Activated T-helper 2 cell treated with anti-CD3 and anti-CD28 coated beads, Interferon-gamma antibody, Interleukin-2, Interleukin-4, amounts not matched to agents 10 μg/mL and 5 μg/mL and 100 μg/mL, durations not matched to agents 14 hours and 24 hours and 36 hours (primary cell): ENCODE measurements at regions of chr3 and their contacts with region 1.

Region 1: DNA sequence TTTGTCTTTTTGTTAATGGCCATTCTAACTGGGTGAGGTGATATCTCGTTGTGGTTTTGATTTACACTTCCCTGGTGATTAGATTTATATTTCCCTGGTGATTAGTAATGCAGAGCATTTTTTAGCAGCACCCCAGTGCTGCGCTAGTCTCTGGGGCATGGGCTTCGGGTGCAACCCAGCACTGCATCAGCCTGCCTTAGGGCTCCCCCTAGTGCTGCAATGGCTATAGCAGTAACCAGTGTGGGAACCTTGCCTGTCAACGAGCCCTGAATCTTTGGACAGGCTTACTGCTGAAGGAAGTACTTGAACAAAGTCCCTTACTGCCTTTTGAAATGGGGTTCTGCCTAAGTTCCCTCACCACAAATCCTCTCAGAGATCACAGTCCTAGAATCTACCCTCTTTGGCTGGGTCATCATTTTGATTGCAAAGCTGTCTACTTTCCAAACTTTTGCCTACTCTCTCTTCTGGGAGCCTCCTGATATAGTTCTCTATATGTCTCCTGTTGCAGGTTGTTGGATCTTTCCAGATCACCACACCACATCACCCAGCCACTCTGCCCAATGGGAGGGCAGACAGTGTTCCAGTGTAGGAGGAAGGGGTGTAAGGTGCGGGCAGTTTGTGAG is 79.2 kb upstream of the CCNL1 start:
- DNase-seq: peak; percentile 57
- H3K4me3 Mint-ChIP-seq: no peak overlapping the region
- H3K27ac Mint-ChIP-seq: no peak overlapping the region
- H3K4me1 Mint-ChIP-seq: peaks cover 2% of the 10 kb centered on the region
- H3K27me3 Mint-ChIP-seq: peaks cover 10% of the 10 kb centered on the region

Region 2: DNA sequence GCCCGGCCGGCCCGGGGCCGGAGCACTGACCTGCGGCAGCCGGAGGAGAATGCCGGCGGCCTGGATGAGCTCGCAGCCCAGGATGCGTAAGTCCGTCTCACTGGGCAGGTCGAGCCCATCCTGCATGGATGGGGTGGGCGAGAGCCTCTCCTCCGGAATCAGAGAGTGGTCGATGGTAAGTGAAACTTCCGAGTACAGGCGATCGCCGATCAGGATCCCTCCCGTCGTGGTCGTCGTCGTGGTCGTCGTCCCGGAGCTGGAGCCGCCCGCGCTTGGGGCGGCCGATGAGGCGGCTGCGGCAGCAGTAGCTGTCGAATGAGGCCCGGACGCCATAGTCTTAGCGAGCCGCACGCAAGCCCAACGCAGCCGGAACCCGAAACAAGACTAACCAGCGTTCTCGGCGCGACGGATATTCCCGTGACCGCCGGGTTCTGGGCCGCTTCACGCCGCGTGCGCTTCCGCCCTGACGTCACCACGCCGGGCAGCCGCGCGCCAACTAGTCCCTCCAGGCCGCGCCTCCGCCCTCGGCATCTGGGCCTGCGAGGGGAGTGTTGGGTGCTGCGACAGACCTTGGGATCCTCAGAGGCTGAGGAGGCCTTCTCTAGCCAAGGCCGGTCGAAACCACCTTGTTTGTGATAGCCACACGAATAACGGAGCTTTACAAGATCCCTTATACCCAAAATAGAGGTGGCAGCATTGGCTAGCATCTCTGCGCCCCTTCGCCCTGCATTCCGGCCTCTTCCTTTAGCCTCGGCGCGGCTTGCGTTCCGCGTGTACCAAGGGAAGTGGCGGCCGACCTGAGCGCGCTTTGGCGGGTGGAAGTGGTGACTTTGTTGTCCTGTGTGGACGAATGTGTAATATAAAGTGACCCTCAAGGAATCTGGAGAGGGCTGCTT is 79.2 kb before region 1 on chr3 and contains the start of gene CCNL1:
- intact Hi-C with region 1: loop called (anchors 2 kb)
- DNase-seq: peak; percentile 95
- H3K4me3 Mint-ChIP-seq: peak within 1 kb of the TSS; percentile 99
- H3K27ac Mint-ChIP-seq: peak within 1 kb of the TSS; percentile 98
- H3K4me1 Mint-ChIP-seq: peaks cover 52% of the 10 kb centered on the region
- H3K27me3 Mint-ChIP-seq: no peaks in the 10 kb centered on the region
- total RNA-seq, gene CCNL1: 160 and 167 TPM in 2 replicates

Region 3: DNA sequence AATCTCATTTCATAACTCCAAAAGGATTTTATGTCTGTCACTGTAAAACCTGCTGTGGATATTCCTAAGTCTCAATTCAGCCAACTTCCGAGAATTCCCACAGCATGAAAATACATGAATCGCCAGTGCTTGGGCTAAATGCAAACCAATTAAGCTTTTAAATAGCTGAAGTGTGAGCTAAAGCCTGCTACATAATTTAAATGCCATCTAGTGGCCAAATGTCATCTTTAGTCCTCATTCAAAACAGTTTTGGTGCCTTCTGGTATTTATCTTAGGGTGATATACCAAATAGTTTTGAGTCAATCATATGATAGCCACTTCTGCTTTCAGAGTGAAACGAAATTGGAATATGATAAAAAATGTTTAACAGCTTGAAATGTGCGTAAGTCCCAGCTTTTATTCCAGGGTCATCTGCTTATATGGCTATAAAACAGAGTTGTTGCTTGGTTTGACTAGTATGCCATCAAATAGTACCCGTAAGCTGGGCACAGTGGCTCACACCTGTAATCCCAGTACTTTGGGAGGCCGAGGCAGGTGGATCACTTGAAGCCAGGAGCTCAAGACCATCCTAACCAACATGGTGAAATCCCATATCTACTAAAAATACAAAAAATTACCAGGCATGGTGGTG is 37.4 kb before region 1 on chr3:
- intact Hi-C with region 1: loop called (anchors 1 kb)
- DNase-seq: no peak
- H3K4me3 Mint-ChIP-seq: no peak overlapping the region
- H3K27ac Mint-ChIP-seq: no peak overlapping the region
- H3K4me1 Mint-ChIP-seq: no peaks in the 10 kb centered on the region
- H3K27me3 Mint-ChIP-seq: peaks cover 5% of the 10 kb centered on the region

Region 4: GRCh38 chr3:157220211-157220610 is 19.0 kb before region 1 on chr3:
- intact Hi-C with region 1: loop called (anchors 2 kb)
- DNase-seq: no peak
- H3K4me3 Mint-ChIP-seq: no peak overlapping the region
- H3K27ac Mint-ChIP-seq: no peak overlapping the region
- H3K4me1 Mint-ChIP-seq: peaks cover 4% of the 10 kb centered on the region
- H3K27me3 Mint-ChIP-seq: peaks cover 22% of the 10 kb centered on the region

Region 5: GRCh38 chr3:157261000-157261399 is 21.8 kb after region 1 on chr3:
- intact Hi-C with region 1: no loop called
- DNase-seq: no peak
- H3K4me3 Mint-ChIP-seq: no peak overlapping the region
- H3K27ac Mint-ChIP-seq: no peak overlapping the region
- H3K4me1 Mint-ChIP-seq: no peaks in the 10 kb centered on the region
- H3K27me3 Mint-ChIP-seq: no peaks in the 10 kb centered on the region

Region 6: DNA sequence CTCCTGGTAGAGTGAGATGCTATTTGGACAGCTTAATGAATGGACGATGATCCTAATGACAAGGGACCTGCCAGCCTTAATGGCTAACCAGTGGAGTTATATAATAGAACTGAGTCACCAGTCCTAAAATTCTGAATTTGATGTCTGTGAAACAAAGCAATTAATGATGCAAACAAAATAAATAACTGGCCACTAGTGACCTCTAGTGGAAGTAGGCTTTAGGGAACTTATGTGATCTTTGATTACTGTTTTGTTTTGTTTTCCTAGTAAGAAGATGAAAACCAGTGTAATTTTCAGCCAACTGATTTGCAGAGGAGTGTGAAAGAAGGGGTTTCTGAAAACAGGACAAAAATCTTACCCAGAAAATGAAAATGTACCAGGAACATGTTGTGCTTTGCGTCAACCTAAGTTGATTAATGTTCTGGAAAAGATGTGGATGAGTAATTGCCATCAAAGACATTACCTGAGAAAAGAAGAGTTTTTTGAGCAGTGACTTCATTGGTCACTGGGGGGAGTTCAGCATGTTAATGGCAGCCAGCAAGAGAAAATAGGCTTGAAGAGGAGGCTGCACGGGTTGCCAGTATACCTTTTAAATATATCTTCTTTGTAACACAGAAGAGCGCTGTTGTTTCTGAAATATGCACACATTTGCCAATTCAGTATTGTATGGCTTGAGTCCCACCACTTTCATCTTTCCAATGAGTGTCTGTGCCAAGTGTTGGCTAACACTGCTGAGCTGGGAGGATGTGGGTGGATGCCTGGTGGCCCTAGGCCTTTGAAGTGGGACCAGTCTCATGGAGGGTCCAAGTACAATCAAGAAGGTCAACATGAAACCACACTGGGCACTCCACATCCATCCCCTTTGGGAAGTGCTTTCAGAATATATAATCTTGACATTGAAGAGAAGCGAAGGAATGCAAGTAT is 254.7 kb after region 1 on chr3:
- intact Hi-C with region 1: no loop called
- DNase-seq: no peak
- H3K4me3 Mint-ChIP-seq: no peak overlapping the region
- H3K27ac Mint-ChIP-seq: no peak overlapping the region
- H3K4me1 Mint-ChIP-seq: no peaks in the 10 kb centered on the region
- H3K27me3 Mint-ChIP-seq: peaks cover 30% of the 10 kb centered on the region

Region 7: GRCh38 chr3:157832588-157832987 is 593.4 kb after region 1 on chr3:
- intact Hi-C with region 1: no loop called
- DNase-seq: no peak
- H3K4me3 Mint-ChIP-seq: no peak overlapping the region
- H3K27ac Mint-ChIP-seq: no peak overlapping the region
- H3K4me1 Mint-ChIP-seq: no peaks in the 10 kb centered on the region
- H3K27me3 Mint-ChIP-seq: no peaks in the 10 kb centered on the region